T-cell (primary cell): ENCODE measurements at regions of chr9 and their contacts with region 1.

Region 1: GRCh38 chr9:124040935-124041816 is 29.6 kb downstream of the LHX2 start:
- DNase-seq: peak in 21 of 35 experiments; percentile 3 to 53 (median 26)
- ATAC-seq: peak; percentile 46 to 60 (median 54)
- H3K4me3 ChIP-seq: peak overlapping the region in 1 of 2 donors; percentile 56
- H3K4me3 Mint-ChIP-seq: peak overlapping the region; percentile 21 to 50 (median 43)
- H3K27ac ChIP-seq: no peak overlapping the region
- H3K27ac Mint-ChIP-seq: no peak overlapping the region
- H3K4me1 ChIP-seq: peaks cover 0 to 12% of the 10 kb centered on the region in 2 experiments
- H3K4me1 Mint-ChIP-seq: peaks cover 0 to 12% (median 11%) of the 10 kb centered on the region in 3 donors
- H3K27me3 ChIP-seq: peaks cover 3 to 90% of the 10 kb centered on the region in 2 experiments
- H3K27me3 Mint-ChIP-seq: peaks cover 59 to 81% of the 10 kb centered on the region in 2 donors

Region 2: DNA sequence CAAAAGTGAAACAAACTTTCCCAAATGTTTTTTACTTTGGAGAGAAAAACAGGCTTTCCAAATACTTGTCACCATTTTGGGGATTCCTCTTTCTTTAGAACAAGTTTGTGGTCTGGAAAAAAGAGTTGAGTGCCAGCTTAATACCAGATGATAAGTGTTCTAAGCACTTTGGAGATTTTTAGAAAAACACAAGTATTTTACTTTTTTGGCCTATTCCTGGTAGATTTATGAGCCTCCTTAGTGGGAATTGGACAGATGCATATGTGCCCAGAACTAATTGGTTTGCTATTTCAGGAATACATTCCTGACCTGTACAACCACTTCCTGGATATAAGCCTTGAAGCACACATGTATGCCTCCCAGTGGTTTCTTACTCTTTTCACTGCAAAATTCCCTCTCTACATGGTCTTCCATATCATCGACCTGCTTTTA is 967.2 kb before region 1 on chr9:
- CTCF ChIA-PET with region 1: interaction called in 1 of 2 experiments, 13 read pairs
- POLR2A ChIA-PET with region 1: no interaction called
- DNase-seq: no peak
- ATAC-seq: no peak
- H3K4me3 ChIP-seq: no peak overlapping the region
- H3K4me3 Mint-ChIP-seq: no peak overlapping the region
- H3K27ac ChIP-seq: no peak overlapping the region
- H3K27ac Mint-ChIP-seq: no peak overlapping the region
- H3K4me1 ChIP-seq: no peaks in the 10 kb centered on the region
- H3K4me1 Mint-ChIP-seq: peaks cover 0 to 6% (median 0%) of the 10 kb centered on the region in 3 donors
- H3K27me3 ChIP-seq: no peaks in the 10 kb centered on the region
- H3K27me3 Mint-ChIP-seq: no peaks in the 10 kb centered on the region

Region 3: GRCh38 chr9:124011420-124012301 is 29.5 kb before region 1 on chr9 and contains the start of gene LHX2:
- CTCF ChIA-PET with region 1: no interaction called
- POLR2A ChIA-PET with region 1: no interaction called
- DNase-seq: no peak
- ATAC-seq: peak in 2 of 4 experiments; percentile 45 to 52
- H3K4me3 ChIP-seq: peak within 1 kb of the TSS in 1 of 2 donors; percentile 52
- H3K4me3 Mint-ChIP-seq: peak within 1 kb of the TSS in 1 of 3 donors; percentile 53
- H3K27ac ChIP-seq: no peak within 1 kb of the TSS
- H3K27ac Mint-ChIP-seq: no peak within 1 kb of the TSS
- H3K4me1 ChIP-seq: peaks cover 7 to 44% of the 10 kb centered on the region in 2 experiments
- H3K4me1 Mint-ChIP-seq: peaks cover 20 to 45% (median 39%) of the 10 kb centered on the region in 3 donors
- H3K27me3 ChIP-seq: peaks cover 28 to 92% of the 10 kb centered on the region in 2 experiments
- H3K27me3 Mint-ChIP-seq: peaks cover 51 to 69% of the 10 kb centered on the region in 2 donors
- total RNA-seq, gene LHX2: not detected

Region 4: DNA sequence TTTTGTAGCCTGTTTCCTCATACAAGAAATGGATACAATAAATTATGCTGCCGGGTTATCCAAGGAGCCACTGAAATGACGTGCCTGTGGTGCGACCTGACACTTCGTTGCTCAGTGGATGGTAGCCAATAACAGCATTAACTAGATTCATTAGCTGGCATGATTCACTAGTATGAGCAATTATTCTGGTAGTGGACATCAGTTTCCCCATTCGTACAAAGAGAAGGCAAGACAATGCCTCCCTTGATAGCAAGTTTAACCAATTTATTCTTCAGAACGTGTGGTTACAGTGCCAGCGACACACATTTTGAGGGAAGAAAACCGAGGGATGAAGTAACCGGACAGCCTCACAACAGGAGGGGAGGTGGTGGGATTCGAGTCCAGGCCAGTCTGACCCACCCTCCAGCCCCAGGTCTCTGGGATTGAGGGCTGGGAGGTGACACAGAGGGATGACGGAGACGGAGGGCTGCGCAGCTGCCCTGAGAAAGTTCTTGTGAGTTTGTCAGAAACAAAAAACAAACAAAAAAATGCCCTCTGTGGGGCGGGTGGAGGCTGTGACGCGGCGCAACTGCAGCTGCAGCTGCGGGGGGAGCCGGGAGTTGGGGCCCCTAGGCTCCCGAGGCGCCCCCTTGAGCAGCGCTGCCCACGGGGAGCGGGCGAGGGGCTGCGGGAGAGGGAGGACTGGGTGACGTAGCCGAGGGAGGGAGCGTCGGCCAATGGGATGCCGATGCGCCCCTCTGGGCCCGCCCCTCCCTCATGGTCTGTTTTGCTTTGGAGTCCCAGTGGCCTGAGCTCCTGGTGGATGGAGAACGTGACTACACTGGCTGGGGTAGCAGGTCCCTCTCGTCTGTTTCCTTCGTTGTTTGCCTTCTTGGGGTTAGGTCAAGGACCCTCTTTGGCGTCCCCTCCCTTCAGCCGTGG is 18.7 kb before region 1 on chr9:
- CTCF ChIA-PET with region 1: no interaction called
- POLR2A ChIA-PET with region 1: no interaction called
- DNase-seq: no peak
- ATAC-seq: no peak
- H3K4me3 ChIP-seq: no peak overlapping the region
- H3K4me3 Mint-ChIP-seq: no peak overlapping the region
- H3K27ac ChIP-seq: no peak overlapping the region
- H3K27ac Mint-ChIP-seq: no peak overlapping the region
- H3K4me1 ChIP-seq: peaks cover 0 to 23% of the 10 kb centered on the region in 2 experiments
- H3K4me1 Mint-ChIP-seq: peaks cover 14 to 25% (median 24%) of the 10 kb centered on the region in 3 donors
- H3K27me3 ChIP-seq: peaks cover 29 to 66% of the 10 kb centered on the region in 2 experiments
- H3K27me3 Mint-ChIP-seq: peaks cover 67 to 82% of the 10 kb centered on the region in 2 donors